HepG2 (cell line): ENCODE measurements at regions of chr14 and their contacts with region 1.

Region 1: DNA sequence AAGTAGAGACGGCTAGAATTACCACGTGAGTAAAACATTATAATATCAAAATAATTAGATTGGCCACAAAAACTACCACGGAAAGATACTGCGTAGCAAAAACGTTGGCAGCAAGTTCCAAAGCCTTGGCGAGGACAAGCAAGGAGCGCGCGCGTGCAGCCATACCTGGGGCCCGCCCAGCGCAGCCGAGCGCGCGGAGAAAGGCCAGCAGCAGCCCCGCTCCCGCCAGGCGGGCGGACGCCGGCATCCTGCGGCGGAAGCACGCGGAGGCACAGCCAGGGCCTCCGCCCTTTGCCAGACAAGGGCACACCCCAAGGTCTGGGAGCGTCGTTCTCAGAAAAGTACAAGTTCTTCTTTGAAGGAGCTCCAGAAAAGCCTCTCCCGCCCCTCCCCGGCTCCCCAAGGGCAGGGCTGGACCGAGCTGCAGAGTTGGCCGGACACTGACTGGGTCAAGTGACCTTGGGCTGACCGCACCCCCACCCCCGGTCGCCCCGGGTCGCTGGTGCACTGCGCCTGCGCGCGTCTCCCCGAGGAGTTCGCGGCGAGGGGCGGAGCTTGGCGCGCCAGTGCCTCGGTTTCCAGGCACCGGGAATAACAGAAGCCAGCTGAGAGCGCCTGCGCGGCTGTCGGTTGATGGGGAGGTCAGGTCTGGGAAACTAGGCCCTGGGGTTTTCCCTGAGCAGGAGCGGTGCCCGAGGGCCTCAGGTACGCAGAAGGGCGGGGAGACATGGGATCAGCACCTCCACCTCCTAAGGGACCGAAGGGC is at the start of gene ZC2HC1C:
- DNase-seq: peak; percentile 89
- ATAC-seq: peak; percentile 86
- H3K4me3 ChIP-seq: peak within 1 kb of the TSS; percentile 67 to 80 (median 68)
- H3K27ac ChIP-seq: peak within 1 kb of the TSS; percentile 95
- H3K4me1 ChIP-seq: peaks cover 46% of the 10 kb centered on the region
- H3K27me3 ChIP-seq: no peaks in the 10 kb centered on the region
- CTCF ChIP-seq: 0 out of 2 replicates have a peak, but pooled peaks have one; percentile 9
- EP300 ChIP-seq: 0 out of 4 replicates have a peak, but pooled peaks of 1 of the 2 experiments have one; percentile 15
- POLR2A ChIP-seq: peak; percentile 85 to 87
- RAD21 ChIP-seq: peak; percentile 54
- total RNA-seq, gene ZC2HC1C: 3.3 and 5.3 TPM in 2 replicates

Region 2: GRCh38 chr14:74893614-74894091 is 175.6 kb before region 1 on chr14:
- CTCF ChIA-PET with region 1: no interaction called
- POLR2A ChIA-PET with region 1: no interaction called
- in situ Hi-C with region 1: no loop called
- intact Hi-C with region 1: no loop called
- DNase-seq: no peak
- ATAC-seq: no peak
- H3K4me3 ChIP-seq: no peak overlapping the region
- H3K27ac ChIP-seq: no peak overlapping the region
- H3K4me1 ChIP-seq: peaks cover 53% of the 10 kb centered on the region
- H3K27me3 ChIP-seq: no peaks in the 10 kb centered on the region
- CTCF ChIP-seq: no peak
- EP300 ChIP-seq: no peak
- POLR2A ChIP-seq: no peak
- RAD21 ChIP-seq: no peak

Region 3: GRCh38 chr14:75042035-75042434 is 27.2 kb before region 1 on chr14:
- CTCF ChIA-PET with region 1: no interaction called
- POLR2A ChIA-PET with region 1: interaction called, 10 read pairs
- in situ Hi-C with region 1: no loop called
- intact Hi-C with region 1: no loop called
- DNase-seq: no peak
- ATAC-seq: peak; percentile 40; the same call in 1 of the 3 replicates
- H3K4me3 ChIP-seq: peak overlapping the region in 1 of 3 experiments; percentile 18; a peak in 1 of 6 replicates
- H3K27ac ChIP-seq: peak overlapping the region; percentile 80
- H3K4me1 ChIP-seq: peaks cover 63% of the 10 kb centered on the region
- H3K27me3 ChIP-seq: no peaks in the 10 kb centered on the region
- CTCF ChIP-seq: no peak
- EP300 ChIP-seq: no peak
- POLR2A ChIP-seq: no peak
- RAD21 ChIP-seq: no peak